Calu3 (cell line): ENCODE measurements at regions of chr7 and their contacts with region 1.

Region 1: DNA sequence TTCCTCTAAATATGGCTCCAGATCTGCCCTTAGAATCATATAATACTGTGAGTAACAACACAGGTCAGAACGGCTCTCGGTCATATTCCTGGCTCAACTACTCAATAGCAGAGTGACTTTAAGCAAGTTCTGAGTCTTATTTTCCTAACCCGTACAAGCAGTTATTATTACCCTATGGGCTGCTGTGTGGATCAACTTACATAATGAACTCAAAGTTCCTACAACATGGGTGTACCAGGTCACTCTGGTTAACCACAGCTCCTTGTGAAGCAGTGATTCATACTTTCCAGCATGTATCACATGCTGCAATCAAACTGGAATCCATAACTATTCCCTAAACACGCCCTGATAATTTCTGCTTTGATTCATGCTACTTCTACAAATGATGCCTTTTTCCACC is 107.3 kb downstream of the LRRN3 start:
- DNase-seq: peak; percentile 64
- H3K4me3 Mint-ChIP-seq: peak overlapping the region; percentile 1
- H3K27ac Mint-ChIP-seq: peak overlapping the region; percentile 76
- H3K4me1 Mint-ChIP-seq: peaks cover 13% of the 10 kb centered on the region
- H3K27me3 Mint-ChIP-seq: no peaks in the 10 kb centered on the region
- CTCF ChIP-seq: no peak

Region 2: DNA sequence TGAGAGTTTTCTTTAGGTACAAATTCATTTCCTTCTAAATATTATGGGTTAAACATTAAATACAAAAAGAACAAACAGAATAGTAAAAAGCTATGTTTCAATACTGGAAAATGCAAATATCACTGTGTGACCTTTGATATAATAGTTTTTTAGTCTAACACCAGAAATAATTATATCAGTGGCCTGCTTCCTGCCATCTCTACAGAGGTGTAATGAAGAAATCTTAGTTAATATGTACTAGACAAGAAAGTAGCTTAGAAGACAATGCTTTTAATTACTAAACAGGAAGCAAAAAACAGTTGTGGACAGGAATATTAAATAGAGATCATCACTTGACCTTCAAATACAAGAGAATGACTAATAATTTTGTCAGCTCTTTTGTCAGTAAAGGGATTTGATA is 154.7 kb before region 1 on chr7:
- CTCF ChIA-PET with region 1: no interaction called
- intact Hi-C with region 1: no loop called
- DNase-seq: no peak
- H3K4me3 Mint-ChIP-seq: no peak overlapping the region
- H3K27ac Mint-ChIP-seq: no peak overlapping the region
- H3K4me1 Mint-ChIP-seq: peaks cover 9% of the 10 kb centered on the region
- H3K27me3 Mint-ChIP-seq: no peaks in the 10 kb centered on the region
- CTCF ChIP-seq: no peak

Region 3: DNA sequence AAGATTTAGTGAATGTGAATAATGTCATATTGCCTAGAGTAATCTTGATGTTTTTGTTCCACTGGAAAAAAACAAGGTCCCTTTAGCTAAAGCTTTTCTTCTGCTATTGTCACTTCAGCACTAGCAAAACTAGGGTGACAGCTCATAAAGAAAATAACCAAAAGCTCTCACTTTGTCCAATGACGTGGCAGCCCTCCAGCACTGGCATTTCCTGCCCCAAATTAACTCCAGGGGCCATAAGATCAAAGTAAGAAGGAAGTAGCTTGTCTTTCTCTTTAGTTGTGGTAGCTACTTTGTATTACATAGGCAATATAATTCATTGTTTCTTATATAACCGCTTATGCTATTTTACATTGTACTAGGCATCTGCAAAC is 60.1 kb before region 1 on chr7:
- CTCF ChIA-PET with region 1: no interaction called
- intact Hi-C with region 1: loop called (anchors 10 kb)
- DNase-seq: peak; percentile 35
- H3K4me3 Mint-ChIP-seq: no peak overlapping the region
- H3K27ac Mint-ChIP-seq: peak overlapping the region; percentile 70
- H3K4me1 Mint-ChIP-seq: peaks cover 14% of the 10 kb centered on the region
- H3K27me3 Mint-ChIP-seq: no peaks in the 10 kb centered on the region
- CTCF ChIP-seq: no peak

Region 4: GRCh38 chr7:111223802-111224253 is 25.6 kb after region 1 on chr7:
- CTCF ChIA-PET with region 1: no interaction called
- intact Hi-C with region 1: loop called (anchors 2 kb)
- DNase-seq: no peak
- H3K4me3 Mint-ChIP-seq: no peak overlapping the region
- H3K27ac Mint-ChIP-seq: no peak overlapping the region
- H3K4me1 Mint-ChIP-seq: no peaks in the 10 kb centered on the region
- H3K27me3 Mint-ChIP-seq: no peaks in the 10 kb centered on the region
- CTCF ChIP-seq: no peak

Region 5: DNA sequence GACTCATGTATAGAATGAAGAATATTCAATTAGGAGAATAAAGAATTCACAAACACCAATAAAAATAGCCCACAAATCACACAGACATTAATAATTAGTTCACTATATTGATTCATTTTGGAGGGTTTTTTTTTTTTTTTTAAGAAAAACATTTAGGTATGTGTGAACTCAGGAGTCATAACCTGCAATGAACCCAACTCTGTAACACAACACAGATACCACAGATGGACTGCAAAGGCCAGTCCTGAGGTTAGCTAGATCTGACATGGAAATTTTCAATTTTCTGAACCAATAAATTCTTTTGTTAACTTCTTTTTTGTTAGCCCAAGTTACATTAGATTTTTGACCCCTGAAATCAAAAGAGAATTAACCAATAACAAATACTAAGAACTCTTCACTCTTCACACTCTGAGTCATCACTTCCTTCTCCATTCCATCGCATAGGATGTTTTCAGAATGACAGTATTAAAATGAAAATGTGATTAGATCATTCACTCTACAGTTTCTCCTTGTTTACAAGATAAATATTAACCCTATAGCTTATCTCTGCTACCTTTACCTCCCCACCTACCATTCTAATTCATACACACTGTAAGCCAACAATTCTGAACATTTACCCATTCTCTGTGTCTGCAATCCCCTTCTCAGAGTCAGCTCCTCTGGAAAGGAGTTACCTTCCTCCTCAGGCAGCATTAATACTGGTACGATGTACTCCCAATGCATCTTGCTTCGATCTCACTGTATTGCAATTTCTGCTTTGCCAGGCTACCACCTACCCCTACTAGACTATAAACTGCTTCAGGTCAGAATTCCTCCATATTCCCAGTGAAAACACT is 34.2 kb after region 1 on chr7:
- CTCF ChIA-PET with region 1: interaction called, 3 read pairs
- intact Hi-C with region 1: loop called (anchors 2 kb)
- DNase-seq: no peak
- H3K4me3 Mint-ChIP-seq: peak overlapping the region; percentile 63
- H3K27ac Mint-ChIP-seq: peak overlapping the region; percentile 90
- H3K4me1 Mint-ChIP-seq: peaks cover 27% of the 10 kb centered on the region
- H3K27me3 Mint-ChIP-seq: no peaks in the 10 kb centered on the region
- CTCF ChIP-seq: no peak